Naive thymus-derived CD4-positive, alpha-beta T cell (primary cell): ENCODE measurements at regions of chr9 and their contacts with region 1.

Region 1: DNA sequence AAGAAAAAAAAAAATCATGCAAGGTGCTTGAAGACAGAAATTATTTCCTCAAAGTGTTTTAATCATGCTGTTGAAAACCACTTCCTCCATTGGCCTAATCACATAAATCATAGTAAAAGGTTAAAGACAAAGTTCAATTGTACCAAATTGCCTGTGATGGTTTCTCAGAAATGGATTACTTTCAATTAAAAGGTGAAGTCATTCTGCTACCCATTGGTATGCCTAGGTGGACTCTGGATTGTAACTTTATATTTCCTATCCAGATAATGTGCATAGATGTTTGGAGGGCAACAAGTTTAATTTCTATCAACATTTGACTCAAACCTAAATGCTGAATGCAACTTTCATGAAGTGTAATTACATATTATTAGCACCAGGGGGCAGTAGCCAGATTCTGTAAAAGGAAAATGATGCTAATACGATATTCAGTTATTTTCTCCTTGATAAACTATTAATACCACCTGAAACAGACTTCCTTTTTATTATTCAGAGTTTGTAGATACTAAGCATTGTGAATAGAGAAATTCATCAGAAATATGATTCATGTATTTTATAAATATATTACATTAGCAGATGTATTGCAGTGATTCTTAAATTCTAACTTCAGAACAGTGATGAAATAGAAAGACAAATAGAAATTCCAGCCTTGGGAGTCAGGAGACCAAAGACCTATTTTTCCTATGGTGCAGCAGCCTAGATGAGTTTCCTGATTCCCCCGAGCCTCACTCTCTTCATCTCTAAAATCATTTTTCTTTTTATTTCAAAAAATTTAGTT is 148.2 kb downstream of the CAAP1 start:
- DNase-seq: peak in 5 of 9 donors; percentile 1 to 14 (median 8)
- ATAC-seq: no peak
- H3K4me3 ChIP-seq: no peak overlapping the region
- H3K4me3 Mint-ChIP-seq: no peak overlapping the region
- H3K27ac ChIP-seq: no peak overlapping the region
- H3K27ac Mint-ChIP-seq: no peak overlapping the region
- H3K4me1 ChIP-seq: no peaks in the 10 kb centered on the region
- H3K4me1 Mint-ChIP-seq: peaks cover 0 to 3% (median 0%) of the 10 kb centered on the region in 7 donors
- H3K27me3 ChIP-seq: no peaks in the 10 kb centered on the region
- H3K27me3 Mint-ChIP-seq: peaks cover 0 to 18% (median 12%) of the 10 kb centered on the region in 5 donors

Region 2: DNA sequence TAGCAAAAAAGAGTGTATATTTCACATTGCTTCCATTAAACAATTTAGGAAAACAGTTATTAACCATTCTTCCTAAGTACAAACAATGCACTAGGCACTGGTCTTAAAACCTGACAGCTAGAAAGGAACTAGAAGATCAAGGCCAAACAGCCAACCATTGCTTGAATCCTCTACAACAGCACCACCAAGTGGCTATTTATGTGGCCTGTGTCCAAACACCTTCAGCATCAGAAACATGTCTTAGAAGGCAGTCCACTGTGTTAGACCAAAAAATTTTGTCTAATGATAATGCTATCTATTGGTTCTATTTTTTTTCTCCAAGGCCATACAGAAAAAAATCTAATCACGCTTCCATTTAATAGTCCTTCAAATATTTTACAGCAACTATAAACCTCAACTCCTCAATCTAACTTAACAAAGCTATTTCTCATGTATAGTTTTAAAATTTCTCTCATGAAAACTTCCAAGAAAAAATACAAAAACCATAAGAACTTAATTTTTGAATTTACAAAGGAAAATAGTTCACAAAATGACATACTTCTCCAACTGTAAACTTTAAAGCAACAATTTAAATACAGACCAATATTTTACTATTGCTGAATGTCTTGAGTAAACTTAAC is 112.1 kb after region 1 on chr9:
- CTCF ChIA-PET with region 1: no interaction called
- POLR2A ChIA-PET with region 1: no interaction called
- intact Hi-C with region 1: loop called in 1 of 2 experiments (anchors 1 kb)
- DNase-seq: peak in 1 of 9 donors; percentile 15
- ATAC-seq: no peak
- H3K4me3 ChIP-seq: no peak overlapping the region
- H3K4me3 Mint-ChIP-seq: no peak overlapping the region
- H3K27ac ChIP-seq: no peak overlapping the region
- H3K27ac Mint-ChIP-seq: no peak overlapping the region
- H3K4me1 ChIP-seq: no peaks in the 10 kb centered on the region
- H3K4me1 Mint-ChIP-seq: peaks cover 0 to 4% (median 0%) of the 10 kb centered on the region in 7 donors
- H3K27me3 ChIP-seq: no peaks in the 10 kb centered on the region
- H3K27me3 Mint-ChIP-seq: no peaks in the 10 kb centered on the region

Region 3: GRCh38 chr9:26863074-26863473 is 118.7 kb after region 1 on chr9:
- CTCF ChIA-PET with region 1: no interaction called
- POLR2A ChIA-PET with region 1: no interaction called
- intact Hi-C with region 1: loop called in 1 of 2 experiments (anchors 1 kb)
- DNase-seq: no peak
- ATAC-seq: no peak
- H3K4me3 ChIP-seq: no peak overlapping the region
- H3K4me3 Mint-ChIP-seq: no peak overlapping the region
- H3K27ac ChIP-seq: no peak overlapping the region
- H3K27ac Mint-ChIP-seq: peak overlapping the region in 1 of 9 donors; percentile 64
- H3K4me1 ChIP-seq: no peaks in the 10 kb centered on the region
- H3K4me1 Mint-ChIP-seq: peaks cover 0 to 4% (median 0%) of the 10 kb centered on the region in 7 donors
- H3K27me3 ChIP-seq: no peaks in the 10 kb centered on the region
- H3K27me3 Mint-ChIP-seq: no peaks in the 10 kb centered on the region

Region 4: DNA sequence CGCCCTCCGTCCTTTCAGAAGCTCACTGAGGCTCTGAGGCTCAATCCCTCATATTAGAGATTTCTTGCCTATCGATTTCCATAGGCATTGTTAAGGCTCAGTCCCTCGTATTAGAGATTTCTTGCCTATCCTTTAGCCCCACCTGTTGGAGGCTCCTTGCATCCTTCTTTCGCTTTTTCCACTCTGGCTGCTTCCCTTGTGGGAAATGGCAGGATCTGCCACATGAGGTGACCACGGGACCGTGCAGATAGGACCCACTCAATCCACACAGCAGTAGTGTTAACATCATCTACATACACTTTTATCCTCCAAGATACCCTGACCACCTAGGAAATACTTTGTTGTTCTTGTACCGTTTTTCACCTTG is 231.3 kb after region 1 on chr9:
- CTCF ChIA-PET with region 1: interaction called, 3 read pairs
- POLR2A ChIA-PET with region 1: no interaction called
- intact Hi-C with region 1: loop called in 1 of 2 experiments (anchors 1 kb)
- DNase-seq: peak in 2 of 9 donors; percentile 11 to 13
- ATAC-seq: no peak
- H3K4me3 ChIP-seq: no peak overlapping the region
- H3K4me3 Mint-ChIP-seq: no peak overlapping the region
- H3K27ac ChIP-seq: no peak overlapping the region
- H3K27ac Mint-ChIP-seq: peak overlapping the region in 2 of 9 donors; percentile 42 to 47
- H3K4me1 ChIP-seq: no peaks in the 10 kb centered on the region
- H3K4me1 Mint-ChIP-seq: peaks cover 0 to 5% (median 0%) of the 10 kb centered on the region in 7 donors
- H3K27me3 ChIP-seq: no peaks in the 10 kb centered on the region
- H3K27me3 Mint-ChIP-seq: no peaks in the 10 kb centered on the region

Region 5: DNA sequence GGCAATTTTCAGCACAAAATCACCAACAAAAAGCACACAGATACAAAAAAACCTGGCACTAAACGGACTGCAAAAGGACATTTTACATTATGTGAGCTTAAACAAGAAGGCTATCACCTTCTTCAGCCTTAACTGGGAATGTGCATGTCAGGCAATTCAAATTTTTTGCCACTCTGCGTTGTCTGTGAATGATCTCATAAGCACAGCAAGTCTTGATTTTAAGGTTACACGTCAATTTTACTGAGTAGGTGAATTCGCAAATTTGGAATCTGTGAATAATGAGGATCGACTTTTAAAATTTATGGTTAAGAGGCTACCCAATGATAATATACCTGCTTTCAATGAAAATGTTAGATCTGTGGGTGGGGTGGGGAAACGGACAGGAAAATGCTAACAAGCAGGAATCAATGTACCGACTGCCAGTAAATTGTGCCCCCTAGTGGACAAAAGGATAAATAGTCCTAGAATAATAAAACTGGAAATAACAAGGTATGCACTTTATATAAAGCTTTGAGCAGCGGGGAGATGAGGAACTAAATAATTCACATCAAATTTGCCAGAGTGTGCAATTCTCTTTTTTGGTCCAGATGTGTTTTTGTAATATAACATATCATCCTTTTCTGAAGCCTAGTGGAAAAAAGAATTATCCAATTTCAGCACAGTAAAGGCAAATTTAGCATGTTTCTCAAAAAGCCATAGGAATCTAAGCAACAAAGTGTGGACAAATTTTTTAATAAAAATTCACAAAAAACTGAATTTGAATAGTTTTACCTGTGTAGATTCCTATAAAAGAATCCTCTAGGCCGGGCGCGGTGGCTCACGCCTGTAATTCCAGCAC is 532.0 kb after region 1 on chr9:
- CTCF ChIA-PET with region 1: interaction called, 3 read pairs
- POLR2A ChIA-PET with region 1: no interaction called
- intact Hi-C with region 1: loop called (anchors 1 kb)
- DNase-seq: peak in 6 of 9 donors; percentile 27 to 51 (median 45)
- ATAC-seq: peak; percentile 48
- H3K4me3 ChIP-seq: no peak overlapping the region
- H3K4me3 Mint-ChIP-seq: peak overlapping the region in 2 of 10 donors; percentile 6 to 8
- H3K27ac ChIP-seq: no peak overlapping the region
- H3K27ac Mint-ChIP-seq: no peak overlapping the region
- H3K4me1 ChIP-seq: no peaks in the 10 kb centered on the region
- H3K4me1 Mint-ChIP-seq: peaks cover 0 to 5% (median 4%) of the 10 kb centered on the region in 7 donors
- H3K27me3 ChIP-seq: no peaks in the 10 kb centered on the region
- H3K27me3 Mint-ChIP-seq: peaks cover 0 to 10% (median 5%) of the 10 kb centered on the region in 5 donors